ENCODE measurements at regions of chr4 and their contacts with region 1.

Region 1: DNA sequence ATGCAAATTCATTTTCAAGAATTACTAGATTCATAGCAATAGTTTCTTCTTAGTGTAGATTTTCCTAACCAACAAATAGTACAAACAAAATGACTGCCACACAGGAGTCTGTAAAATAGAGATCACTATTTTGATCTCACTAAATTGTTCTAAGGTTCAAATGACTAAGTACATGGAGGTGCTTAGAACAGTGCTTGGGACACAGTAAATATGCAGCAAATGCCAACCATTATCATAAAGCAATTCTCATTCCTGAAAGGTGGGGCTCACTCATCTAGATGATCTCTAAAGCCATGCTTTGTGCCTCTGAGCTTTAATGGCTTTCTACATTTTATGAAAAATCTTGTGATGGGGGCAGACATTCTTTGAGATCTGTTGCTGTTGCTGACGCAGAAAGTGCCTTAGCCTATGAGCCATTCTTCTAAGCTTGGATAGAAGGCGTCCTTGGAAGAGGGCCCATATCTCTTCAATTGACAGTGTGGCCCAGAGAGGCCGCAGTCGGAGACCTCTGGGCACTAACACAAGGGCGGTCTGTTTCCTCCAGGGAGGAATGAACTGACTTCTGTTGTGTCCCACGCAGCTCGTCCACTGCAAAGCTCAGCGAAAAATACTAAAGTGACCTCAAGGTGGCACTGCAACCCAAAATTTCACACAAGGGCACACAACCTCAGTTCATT is 23.5 kb downstream of the TLR10 start:
- DNase-seq: peak; percentile 27 to 85
- ATAC-seq: peak; percentile 56 to 78 (median 76)
- H3K4me3 ChIP-seq: no peak overlapping the region
- H3K4me3 Mint-ChIP-seq: no peak overlapping the region
- H3K27ac ChIP-seq: no peak overlapping the region
- H3K27ac Mint-ChIP-seq: no peak overlapping the region
- H3K4me1 ChIP-seq: peaks cover 24% of the 10 kb centered on the region
- H3K4me1 Mint-ChIP-seq: peaks cover 15 to 17% of the 10 kb centered on the region in 2 donors
- H3K27me3 ChIP-seq: no peaks in the 10 kb centered on the region
- H3K27me3 Mint-ChIP-seq: peaks cover 0 to 7% of the 10 kb centered on the region in 2 donors
- CTCF ChIP-seq: peak; percentile 78

Region 2: GRCh38 chr4:38782452-38783108 is 23.3 kb after region 1 on chr4 and contains the start of gene TLR10:
- intact Hi-C with region 1: loop called (anchors 1 kb)
- DNase-seq: peak in 1 of 2 donors; percentile 76
- ATAC-seq: peak; percentile 80 to 89 (median 85)
- H3K4me3 ChIP-seq: peak within 1 kb of the TSS; percentile 35
- H3K4me3 Mint-ChIP-seq: no peak within 1 kb of the TSS
- H3K27ac ChIP-seq: peak within 1 kb of the TSS; percentile 47
- H3K27ac Mint-ChIP-seq: no peak within 1 kb of the TSS
- H3K4me1 ChIP-seq: peaks cover 5% of the 10 kb centered on the region
- H3K4me1 Mint-ChIP-seq: peaks cover 5% of the 10 kb centered on the region in 2 donors
- H3K27me3 ChIP-seq: no peaks in the 10 kb centered on the region
- H3K27me3 Mint-ChIP-seq: peaks cover 3 to 8% of the 10 kb centered on the region in 2 donors
- CTCF ChIP-seq: peak; percentile 81
- total RNA-seq, gene TLR10: 0.31 to 0.63 (median 0.59) TPM

Region 3: GRCh38 chr4:38804654-38805295 is 45.5 kb after region 1 on chr4 and contains the start of gene TLR1:
- intact Hi-C with region 1: loop called (anchors 2 kb)
- DNase-seq: peak in 1 of 2 donors; percentile 77
- ATAC-seq: peak; percentile 82 to 85 (median 83)
- H3K4me3 ChIP-seq: peak within 1 kb of the TSS; percentile 58
- H3K4me3 Mint-ChIP-seq: peak within 1 kb of the TSS; percentile 99
- H3K27ac ChIP-seq: peak within 1 kb of the TSS; percentile 63
- H3K27ac Mint-ChIP-seq: peak within 1 kb of the TSS; percentile 94
- H3K4me1 ChIP-seq: peaks cover 32% of the 10 kb centered on the region
- H3K4me1 Mint-ChIP-seq: peaks cover 41 to 51% of the 10 kb centered on the region in 2 donors
- H3K27me3 ChIP-seq: no peaks in the 10 kb centered on the region
- H3K27me3 Mint-ChIP-seq: no peaks in the 10 kb centered on the region
- CTCF ChIP-seq: peak; percentile 78
- total RNA-seq, gene TLR1: 25.6 to 51.5 (median 30.0) TPM

Region 4: DNA sequence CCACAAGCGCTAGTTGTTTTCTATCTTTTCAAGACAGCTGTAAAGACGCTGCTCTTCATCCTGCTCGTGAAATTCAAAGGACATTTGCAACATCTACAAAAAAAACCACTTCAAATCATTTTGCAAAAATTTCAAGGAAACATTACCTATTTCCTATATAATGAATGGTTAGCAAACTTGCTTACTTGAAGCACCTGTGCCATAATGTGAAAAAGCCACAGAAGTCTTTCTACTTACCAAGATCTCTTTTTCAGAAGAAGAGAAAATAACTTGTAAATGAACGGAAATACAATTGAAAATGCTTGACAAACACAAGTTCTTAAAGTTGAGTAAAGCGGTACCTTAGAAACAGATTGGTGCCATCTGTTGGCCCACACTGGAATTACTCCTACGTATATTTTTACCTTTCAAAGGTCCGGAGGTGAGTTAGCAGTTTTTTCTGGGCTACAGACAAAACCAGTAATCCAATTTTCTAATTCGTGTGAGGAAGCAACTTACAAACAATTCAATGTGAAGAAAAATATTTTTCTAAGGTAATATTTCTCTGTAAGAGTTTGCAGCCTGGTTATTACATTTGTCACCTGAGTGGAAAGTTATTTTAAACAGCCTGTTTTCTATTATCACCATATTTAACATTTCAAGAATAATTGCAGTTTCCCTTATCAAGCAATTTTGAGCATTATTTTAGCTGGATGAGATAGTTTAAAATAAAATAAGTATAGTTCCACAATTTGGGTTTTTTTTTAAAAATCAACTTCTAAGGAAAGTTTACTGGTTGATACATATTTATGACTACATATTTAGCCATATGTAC is 97.5 kb after region 1 on chr4 and contains the start of gene TLR6:
- intact Hi-C with region 1: loop called (anchors 1 kb)
- DNase-seq: peak in 1 of 2 donors; percentile 89
- ATAC-seq: peak; percentile 77 to 81 (median 79)
- H3K4me3 ChIP-seq: peak within 1 kb of the TSS; percentile 48
- H3K4me3 Mint-ChIP-seq: peak within 1 kb of the TSS; percentile 92
- H3K27ac ChIP-seq: peak within 1 kb of the TSS; percentile 65
- H3K27ac Mint-ChIP-seq: peak within 1 kb of the TSS; percentile 78 to 84
- H3K4me1 ChIP-seq: peaks cover 13% of the 10 kb centered on the region
- H3K4me1 Mint-ChIP-seq: peaks cover 0 to 13% of the 10 kb centered on the region in 2 donors
- H3K27me3 ChIP-seq: no peaks in the 10 kb centered on the region
- H3K27me3 Mint-ChIP-seq: peaks cover 8 to 10% of the 10 kb centered on the region in 2 donors
- CTCF ChIP-seq: peak; percentile 83
- total RNA-seq, gene TLR6: 6.3 to 9.8 (median 6.8) TPM

Region 5: DNA sequence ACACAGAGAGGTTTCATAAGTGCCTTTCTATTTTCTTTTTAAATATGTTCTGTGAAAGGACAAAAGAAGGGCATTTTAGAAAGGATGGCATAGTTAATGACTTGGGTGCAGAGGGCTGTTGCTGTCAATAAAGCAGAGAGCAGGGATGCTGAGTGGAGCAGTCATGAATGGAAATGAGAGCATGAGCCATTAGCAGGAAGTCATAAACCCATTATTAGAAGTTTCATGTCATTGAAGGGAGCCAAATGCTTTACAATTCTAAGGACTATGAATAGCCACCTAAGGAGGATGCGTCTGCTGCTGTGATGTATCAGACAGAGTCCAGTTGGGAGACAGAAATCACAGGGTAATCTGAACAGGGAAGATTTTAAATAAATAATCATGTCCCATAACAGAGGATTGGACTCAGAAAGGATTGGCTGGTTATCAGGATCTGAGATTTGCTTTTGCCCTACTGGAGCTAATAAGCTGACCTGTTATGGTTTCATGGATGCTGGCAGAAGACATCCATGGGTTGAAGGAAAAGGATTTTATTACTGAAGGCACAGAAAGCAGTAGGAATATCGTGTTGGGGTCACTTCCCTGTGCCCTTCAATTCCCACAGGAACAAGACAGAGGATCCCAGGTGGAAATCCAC is 375.6 kb after region 1 on chr4:
- intact Hi-C with region 1: loop called (anchors 1 kb)
- DNase-seq: no peak
- ATAC-seq: no peak
- H3K4me3 ChIP-seq: no peak overlapping the region
- H3K4me3 Mint-ChIP-seq: no peak overlapping the region
- H3K27ac ChIP-seq: no peak overlapping the region
- H3K27ac Mint-ChIP-seq: no peak overlapping the region
- H3K4me1 ChIP-seq: peaks cover 6% of the 10 kb centered on the region
- H3K4me1 Mint-ChIP-seq: peaks cover 0 to 6% of the 10 kb centered on the region in 2 donors
- H3K27me3 ChIP-seq: no peaks in the 10 kb centered on the region
- H3K27me3 Mint-ChIP-seq: no peaks in the 10 kb centered on the region
- CTCF ChIP-seq: no peak

Measured in natural killer cell (primary cell).